ENCODE measurements at regions of chr2 and their contacts with region 1.

Region 1: DNA sequence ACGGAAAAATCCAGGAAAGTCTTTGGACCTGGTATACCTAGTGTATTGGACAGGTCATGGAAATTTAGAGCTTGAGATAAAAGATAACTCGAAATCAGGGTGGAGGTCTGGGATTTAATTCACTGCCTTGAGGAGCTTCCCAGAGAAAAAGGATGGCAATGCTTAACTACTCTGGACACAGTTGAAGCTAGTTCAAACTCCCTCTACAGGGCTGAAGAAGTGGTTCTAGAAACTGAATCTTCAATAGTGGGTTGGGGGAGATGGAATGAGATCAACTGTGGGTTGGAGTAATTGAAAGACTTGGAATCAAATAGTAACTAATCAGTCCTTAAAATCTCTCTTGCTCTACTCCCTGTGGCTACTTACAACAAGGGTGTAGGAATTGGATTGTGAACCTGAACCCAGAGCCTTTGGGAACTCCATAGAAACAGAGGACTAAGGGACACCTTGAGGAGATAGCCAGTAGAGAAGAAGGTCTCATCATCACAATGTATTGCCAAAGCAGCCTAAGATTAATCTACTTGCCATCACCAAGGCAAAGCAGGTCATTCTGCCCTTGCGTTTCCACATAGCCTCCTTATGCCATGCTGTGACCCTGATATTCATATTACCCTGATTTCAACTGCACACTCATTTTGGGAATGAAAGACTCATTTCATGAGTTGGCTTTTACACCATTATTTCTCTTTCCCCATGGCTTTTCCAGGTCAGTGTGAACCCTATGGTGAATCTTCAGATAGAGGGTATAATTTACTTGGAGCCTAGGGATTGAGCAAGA is 599.9 kb downstream of the IRS1 start:
- DNase-seq: no peak
- H3K4me3 Mint-ChIP-seq: no peak overlapping the region
- H3K27ac Mint-ChIP-seq: no peak overlapping the region
- H3K4me1 Mint-ChIP-seq: no peaks in the 10 kb centered on the region
- H3K27me3 Mint-ChIP-seq: peaks cover 3% of the 10 kb centered on the region

Region 2: GRCh38 chr2:225865468-225865867 is 334.3 kb before region 1 on chr2:
- intact Hi-C with region 1: loop called (anchors 5 kb)
- DNase-seq: no peak
- H3K4me3 Mint-ChIP-seq: no peak overlapping the region
- H3K27ac Mint-ChIP-seq: no peak overlapping the region
- H3K4me1 Mint-ChIP-seq: no peaks in the 10 kb centered on the region
- H3K27me3 Mint-ChIP-seq: no peaks in the 10 kb centered on the region

Measured in activated T-helper 1 cell treated with anti-CD3 and anti-CD28 coated beads, Interleukin-12 subunit alpha, Interleukin-12 subunit beta, Interleukin-2, Interleukin-4 antibody, amounts not matched to agents 30 ng/mL and 10 ng/mL and 1 ng/mL, durations not matched to agents 14 hours and 24 hours and 36 hours (primary cell).